GM10248 (cell line): ENCODE measurements at regions of chr12 and their contacts with region 1.

Region 1: DNA sequence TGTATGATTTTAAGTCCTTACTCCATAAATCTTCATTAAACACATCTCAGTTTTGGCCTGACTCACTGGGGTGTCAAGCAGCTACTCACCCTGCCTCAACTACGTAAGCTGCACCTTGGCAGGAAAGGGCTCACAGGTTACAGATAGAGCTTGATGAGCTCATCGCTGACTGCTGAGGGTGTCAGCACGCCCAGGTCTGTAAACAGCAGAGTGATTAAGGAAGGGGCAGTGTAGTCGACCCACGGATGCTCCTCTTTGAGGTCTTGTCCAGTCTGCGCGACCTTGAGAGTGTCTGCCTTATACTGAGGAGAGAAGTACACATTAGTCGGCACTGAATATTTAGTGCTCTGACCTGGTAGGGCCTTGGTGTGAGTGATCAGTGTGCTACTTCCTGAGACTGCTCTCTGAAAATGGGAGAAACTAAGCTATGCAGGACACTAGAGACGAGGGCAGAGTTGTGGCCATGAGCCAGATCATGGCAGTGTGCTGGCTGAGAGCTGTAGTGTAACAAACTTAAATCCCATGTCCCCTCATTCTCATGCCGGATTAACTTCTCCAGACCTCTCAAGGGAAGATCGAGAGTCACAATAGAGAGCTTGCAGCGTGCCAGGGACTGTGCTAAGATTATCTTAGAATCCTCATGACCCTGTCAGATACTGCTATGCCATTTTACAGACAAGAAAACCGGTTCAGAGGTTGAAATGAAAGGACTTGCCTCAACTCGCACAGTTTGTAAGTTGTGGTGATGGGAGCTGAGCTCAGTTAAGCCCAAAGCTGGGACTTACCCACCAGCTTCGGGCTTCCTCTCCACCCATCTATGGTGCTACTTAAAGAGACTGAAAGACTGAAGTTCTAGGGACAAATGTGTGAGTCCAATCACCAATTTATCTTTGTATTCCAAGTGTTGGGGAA is 11.6 kb downstream of the EIF2B1 start:
- DNase-seq: no peak
- CTCF ChIP-seq: no peak

Region 2: DNA sequence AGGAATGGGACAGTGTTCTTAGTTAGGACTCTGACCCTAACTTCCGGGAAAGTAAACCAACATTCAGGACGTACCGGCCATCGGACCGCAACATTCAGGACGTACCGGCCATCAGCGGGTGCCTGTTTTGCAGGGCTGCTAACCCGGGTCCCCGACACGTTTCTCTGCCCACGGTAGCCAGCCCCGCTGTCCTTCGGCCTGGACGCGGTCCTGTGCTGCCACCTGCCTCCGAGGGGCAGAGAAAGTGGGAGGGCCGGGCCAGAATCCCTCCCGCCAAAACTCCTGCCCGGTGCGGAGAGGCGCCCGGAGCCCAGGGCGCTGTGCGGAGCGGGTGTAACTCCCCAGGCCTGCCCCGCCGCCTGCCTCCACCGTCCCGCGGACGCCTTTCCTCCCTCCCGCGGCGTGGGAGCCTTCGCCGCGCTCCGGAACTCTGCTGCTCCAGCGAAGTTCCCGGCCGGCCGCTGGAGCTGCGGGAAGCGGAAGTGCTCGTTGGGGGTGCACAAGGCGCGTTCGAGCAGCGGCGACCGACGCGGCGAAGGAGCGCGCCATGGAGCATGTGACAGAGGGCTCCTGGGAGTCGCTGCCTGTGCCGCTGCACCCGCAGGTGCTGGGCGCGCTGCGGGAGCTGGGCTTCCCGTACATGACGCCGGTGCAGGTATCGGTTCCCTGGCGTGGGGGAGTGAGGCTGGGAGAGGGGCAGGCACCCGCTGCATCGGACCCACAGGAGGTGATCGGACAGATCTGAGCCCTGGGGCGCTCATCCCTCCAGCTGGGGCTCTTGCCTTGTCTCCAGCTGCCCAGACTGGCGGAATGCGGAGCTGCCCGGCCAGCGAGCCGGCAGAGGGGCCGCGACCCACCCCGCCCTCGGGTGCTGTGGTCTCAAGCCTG is 20.0 kb before region 1 on chr12 and contains the start of gene DDX55:
- CTCF ChIA-PET with region 1: interaction called, 12 read pairs
- POLR2A ChIA-PET with region 1: no interaction called
- DNase-seq: peak; percentile 90
- CTCF ChIP-seq: peak; percentile 48